ENCODE measurements at regions of chr1 and their contacts with region 1.

Region 1: DNA sequence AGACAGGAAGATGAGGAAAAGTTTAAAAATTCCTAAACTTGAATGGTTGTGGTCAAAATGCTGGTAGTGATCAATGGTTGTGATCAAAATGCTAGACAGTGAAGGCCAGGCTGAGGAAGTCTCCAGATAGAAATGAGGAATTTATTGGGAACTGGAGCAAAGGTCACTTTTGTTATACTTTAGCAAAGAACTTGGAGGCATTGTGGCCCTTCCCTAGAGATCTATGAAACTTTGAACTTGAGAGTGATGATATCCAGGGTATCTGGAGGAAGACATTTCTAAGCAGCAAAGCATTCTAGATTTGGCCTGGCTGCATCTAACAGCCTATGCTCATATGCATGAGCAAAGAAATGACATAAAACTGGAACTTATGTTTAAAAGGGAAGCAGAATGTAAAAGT is 35.5 kb upstream of the RABGAP1L start:
- DNase-seq: no peak
- ATAC-seq: no peak
- H3K4me3 ChIP-seq: no peak overlapping the region
- H3K27ac ChIP-seq: no peak overlapping the region
- H3K4me1 ChIP-seq: no peaks in the 10 kb centered on the region
- H3K27me3 ChIP-seq: no peaks in the 10 kb centered on the region; a peak in 1 of 5 replicates
- CTCF ChIP-seq: no peak
- EP300 ChIP-seq: no peak
- POLR2A ChIP-seq: no peak
- RAD21 ChIP-seq: no peak

Region 2: DNA sequence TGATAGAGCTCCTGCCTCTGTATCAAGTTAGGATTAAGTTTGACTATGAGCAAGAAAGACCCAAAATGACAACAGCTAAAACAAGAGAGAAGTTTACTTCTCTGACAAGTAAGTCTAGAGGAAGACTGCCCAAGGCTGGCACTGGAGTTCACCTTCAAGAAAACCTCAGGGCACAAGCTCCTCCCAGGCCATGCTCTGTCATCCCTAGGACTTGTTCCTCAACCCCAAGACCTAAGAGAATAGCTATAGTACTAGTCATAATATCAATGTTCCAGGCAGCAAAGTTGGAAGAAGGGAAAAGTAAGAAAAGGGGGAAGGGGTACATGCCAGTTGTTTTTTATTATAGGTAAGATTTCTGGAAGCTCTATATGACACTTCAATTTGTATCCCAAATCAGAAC is 325.8 kb before region 1 on chr1:
- CTCF ChIA-PET with region 1: no interaction called
- POLR2A ChIA-PET with region 1: no interaction called
- in situ Hi-C with region 1: no loop called
- intact Hi-C with region 1: no loop called
- DNase-seq: no peak
- ATAC-seq: no peak
- H3K4me3 ChIP-seq: no peak overlapping the region
- H3K27ac ChIP-seq: no peak overlapping the region
- H3K4me1 ChIP-seq: no peaks in the 10 kb centered on the region
- H3K27me3 ChIP-seq: no peaks in the 10 kb centered on the region
- CTCF ChIP-seq: no peak
- EP300 ChIP-seq: no peak
- POLR2A ChIP-seq: no peak
- RAD21 ChIP-seq: no peak

Region 3: GRCh38 chr1:174105086-174105485 is 18.8 kb before region 1 on chr1:
- CTCF ChIA-PET with region 1: no interaction called
- POLR2A ChIA-PET with region 1: no interaction called
- in situ Hi-C with region 1: no loop called
- intact Hi-C with region 1: no loop called
- DNase-seq: no peak
- ATAC-seq: peak; percentile 46
- H3K4me3 ChIP-seq: no peak overlapping the region
- H3K27ac ChIP-seq: no peak overlapping the region
- H3K4me1 ChIP-seq: no peaks in the 10 kb centered on the region; a peak in 1 of 5 replicates
- H3K27me3 ChIP-seq: peaks cover 9 to 12% of the 10 kb centered on the region in 2 experiments; a peak in 3 of 5 replicates
- CTCF ChIP-seq: no peak
- EP300 ChIP-seq: no peak
- POLR2A ChIP-seq: no peak
- RAD21 ChIP-seq: no peak

Region 4: GRCh38 chr1:174197547-174197946 is 73.7 kb after region 1 on chr1:
- CTCF ChIA-PET with region 1: no interaction called
- POLR2A ChIA-PET with region 1: no interaction called
- in situ Hi-C with region 1: loop called (anchors 5 kb)
- intact Hi-C with region 1: loop called (anchors 1 kb)
- DNase-seq: no peak
- ATAC-seq: no peak
- H3K4me3 ChIP-seq: no peak overlapping the region
- H3K27ac ChIP-seq: no peak overlapping the region
- H3K4me1 ChIP-seq: peaks cover 3 to 6% of the 10 kb centered on the region in 2 experiments; a peak in 2 of 5 replicates
- H3K27me3 ChIP-seq: no peaks in the 10 kb centered on the region
- CTCF ChIP-seq: no peak
- EP300 ChIP-seq: no peak
- POLR2A ChIP-seq: no peak
- RAD21 ChIP-seq: no peak

Region 5: DNA sequence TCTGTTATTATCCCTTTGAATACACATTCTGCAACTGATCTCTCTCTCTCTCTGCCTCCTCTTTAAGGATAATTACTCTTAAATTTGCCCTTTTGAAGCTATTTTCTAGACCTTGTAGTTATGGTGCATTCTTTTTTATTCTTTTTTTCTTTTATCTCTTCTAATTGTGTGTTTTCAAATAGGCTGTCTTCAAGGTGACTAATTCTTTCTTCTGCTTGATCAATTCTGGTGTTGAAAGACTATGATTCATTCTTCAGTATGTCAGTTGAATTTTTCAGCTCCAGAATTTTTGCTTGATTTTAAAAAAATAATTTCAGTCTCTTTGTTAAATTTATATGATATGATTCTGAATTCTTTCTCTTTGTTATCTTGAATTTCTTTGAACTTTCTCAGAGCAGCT is 228.3 kb after region 1 on chr1:
- CTCF ChIA-PET with region 1: no interaction called
- POLR2A ChIA-PET with region 1: no interaction called
- in situ Hi-C with region 1: no loop called
- intact Hi-C with region 1: no loop called
- DNase-seq: no peak
- ATAC-seq: no peak
- H3K4me3 ChIP-seq: no peak overlapping the region
- H3K27ac ChIP-seq: no peak overlapping the region
- H3K4me1 ChIP-seq: no peaks in the 10 kb centered on the region
- H3K27me3 ChIP-seq: no peaks in the 10 kb centered on the region
- CTCF ChIP-seq: no peak
- EP300 ChIP-seq: no peak
- POLR2A ChIP-seq: no peak
- RAD21 ChIP-seq: no peak